ENCODE measurements at regions of chr9 and their contacts with region 1.

Region 1: GRCh38 chr9:127779136-127779981 is 893 bp upstream of the SH2D3C start:
- DNase-seq: peak; percentile 86
- H3K4me3 Mint-ChIP-seq: peak overlapping the region; percentile 98
- H3K27ac Mint-ChIP-seq: peak overlapping the region; percentile 98
- H3K4me1 Mint-ChIP-seq: peaks cover 55% of the 10 kb centered on the region
- H3K27me3 Mint-ChIP-seq: no peaks in the 10 kb centered on the region

Region 2: DNA sequence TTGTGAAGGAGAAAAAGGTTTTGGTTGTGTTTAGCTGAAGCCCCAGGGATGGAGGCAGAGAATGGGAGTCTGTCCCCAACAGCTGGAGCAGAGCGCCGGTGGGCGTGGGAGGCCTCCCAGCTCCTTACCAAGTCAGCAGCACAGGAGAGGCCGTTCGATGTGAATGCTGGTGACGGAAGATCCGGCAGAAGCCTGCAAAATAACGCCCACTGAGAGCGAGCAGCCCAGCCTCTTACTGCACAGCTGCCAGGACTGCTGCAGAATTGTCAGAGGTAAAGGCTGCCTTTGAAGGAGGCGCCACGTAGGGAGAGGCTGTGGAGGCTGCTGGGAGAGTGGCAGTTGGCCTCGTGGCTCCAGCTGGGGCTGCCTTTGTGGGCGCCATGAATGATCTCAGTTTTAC is 683.2 kb before region 1 on chr9:
- intact Hi-C with region 1: no loop called
- DNase-seq: no peak
- H3K4me3 Mint-ChIP-seq: no peak overlapping the region
- H3K27ac Mint-ChIP-seq: no peak overlapping the region
- H3K4me1 Mint-ChIP-seq: no peaks in the 10 kb centered on the region
- H3K27me3 Mint-ChIP-seq: peaks cover 4% of the 10 kb centered on the region

Region 3: DNA sequence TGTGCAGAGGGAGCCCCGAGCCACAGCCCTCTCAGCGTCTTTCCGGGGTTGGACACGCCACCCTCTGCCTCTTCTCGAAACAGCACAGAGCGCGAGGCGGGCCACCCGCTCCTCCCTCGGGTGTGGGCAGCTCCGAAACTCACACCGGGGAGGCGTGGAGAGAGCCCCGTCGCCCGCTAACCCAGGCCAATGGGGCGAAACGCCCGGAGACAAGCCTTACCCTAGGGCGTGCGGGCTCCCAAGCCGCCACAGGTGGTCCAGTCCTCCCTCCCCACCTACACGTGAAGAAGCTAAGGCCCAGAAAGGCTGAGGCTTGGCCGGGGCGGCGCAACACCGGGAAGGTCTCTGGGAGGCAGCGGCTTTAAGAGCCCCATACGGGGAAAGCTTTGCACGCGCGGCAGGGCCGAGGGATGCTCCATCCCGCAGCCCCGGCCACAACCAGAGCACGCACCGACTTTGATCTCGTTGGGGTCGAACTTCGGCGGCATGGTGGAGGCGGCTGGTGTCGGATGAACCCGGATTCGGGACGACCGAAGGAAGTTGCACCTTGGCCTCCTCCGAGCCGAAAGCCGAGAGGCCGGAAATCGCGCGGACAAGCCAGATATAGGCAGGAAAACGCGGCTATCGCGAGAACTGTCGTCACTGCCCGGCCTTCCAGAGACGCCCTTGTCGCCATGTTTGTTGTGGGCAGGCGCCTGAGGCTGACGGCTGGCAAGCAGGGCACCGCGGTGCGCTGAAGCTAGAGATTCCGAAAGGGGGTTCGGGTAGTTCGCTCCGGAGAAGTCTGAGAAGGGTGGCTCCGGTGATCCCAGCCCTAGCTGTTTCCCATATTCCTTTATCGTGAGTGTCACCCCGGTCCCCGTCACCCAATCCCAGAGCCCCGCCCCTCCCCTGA is 328.3 kb before region 1 on chr9 and contains the starts of genes LRSAM1 and RPL12:
- intact Hi-C with region 1: loop called (anchors 5 kb)
- DNase-seq: peak; percentile 99
- H3K4me3 Mint-ChIP-seq: peak within 1 kb of the TSS; percentile 98
- H3K27ac Mint-ChIP-seq: peak within 1 kb of the TSS; percentile 98
- H3K4me1 Mint-ChIP-seq: peaks cover 46% of the 10 kb centered on the region
- H3K27me3 Mint-ChIP-seq: no peaks in the 10 kb centered on the region
- total RNA-seq, gene LRSAM1: 24.6 and 26.4 TPM in 2 replicates
- total RNA-seq, gene RPL12: 1,245 and 1,252 TPM in 2 replicates

Region 4: DNA sequence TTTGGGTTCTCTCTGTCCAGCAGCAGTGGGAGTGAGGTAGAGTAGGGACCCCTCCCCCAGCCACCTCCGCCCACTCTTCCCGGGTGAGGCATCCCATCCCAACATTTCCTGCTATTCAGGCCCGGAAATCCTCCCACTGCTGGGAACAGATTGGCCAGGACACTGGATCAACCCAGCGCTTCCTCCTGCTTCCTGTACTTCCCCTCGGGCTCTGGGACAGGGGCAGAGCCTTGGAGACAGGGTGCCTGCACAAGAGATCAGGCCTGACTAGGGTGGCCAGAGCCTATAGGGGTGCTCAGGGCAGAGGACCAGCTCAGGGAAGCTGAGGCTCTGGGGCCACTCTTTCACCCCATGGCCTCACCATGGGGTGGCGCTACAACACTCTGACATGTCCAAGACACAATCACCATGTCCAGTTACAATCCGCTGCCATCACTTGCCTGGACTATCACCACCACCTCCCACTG is 15.4 kb before region 1 on chr9:
- intact Hi-C with region 1: loop called (anchors 2 kb)
- DNase-seq: peak; percentile 76
- H3K4me3 Mint-ChIP-seq: no peak overlapping the region
- H3K27ac Mint-ChIP-seq: peak overlapping the region; percentile 70
- H3K4me1 Mint-ChIP-seq: peaks cover 47% of the 10 kb centered on the region
- H3K27me3 Mint-ChIP-seq: no peaks in the 10 kb centered on the region

Region 5: DNA sequence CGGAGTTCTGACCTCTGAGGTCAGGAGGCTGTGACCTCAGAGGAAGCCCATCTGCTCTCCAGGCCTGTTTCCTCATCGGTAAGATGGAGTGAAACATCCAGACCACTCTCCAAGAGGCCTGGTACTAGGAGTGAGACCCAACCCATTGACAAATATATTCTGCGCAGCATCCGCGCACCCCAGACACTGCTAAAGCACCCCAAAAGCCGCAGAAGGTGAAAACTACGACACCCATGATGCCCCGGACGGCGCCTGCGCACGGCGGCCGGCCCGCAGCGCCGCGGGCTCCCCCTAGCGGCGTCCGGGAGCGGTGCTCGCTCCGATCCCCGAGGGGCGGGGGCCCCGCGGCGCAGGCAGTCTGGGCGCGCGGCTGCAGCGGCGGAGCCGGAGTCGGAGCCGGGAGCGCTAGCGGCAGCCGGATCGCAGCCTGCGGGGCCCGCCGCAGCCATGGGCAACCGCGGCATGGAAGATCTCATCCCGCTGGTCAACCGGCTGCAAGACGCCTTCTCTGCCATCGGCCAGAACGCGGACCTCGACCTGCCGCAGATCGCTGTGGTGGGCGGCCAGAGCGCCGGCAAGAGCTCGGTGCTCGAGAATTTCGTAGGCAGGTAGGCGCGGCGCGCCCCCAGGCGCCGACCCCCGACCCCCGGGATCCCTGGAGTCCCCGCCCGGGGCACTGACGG is 423.8 kb after region 1 on chr9 and contains the start of gene DNM1:
- intact Hi-C with region 1: no loop called
- DNase-seq: peak; percentile 95
- H3K4me3 Mint-ChIP-seq: peak within 1 kb of the TSS; percentile 72
- H3K27ac Mint-ChIP-seq: peak within 1 kb of the TSS; percentile 64
- H3K4me1 Mint-ChIP-seq: peaks cover 16% of the 10 kb centered on the region
- H3K27me3 Mint-ChIP-seq: peaks cover 32% of the 10 kb centered on the region
- total RNA-seq, gene DNM1: 0.95 and 1.5 TPM in 2 replicates